MCF 10A (cell line): ENCODE measurements at regions of chr9 and their contacts with region 1.

Region 1: DNA sequence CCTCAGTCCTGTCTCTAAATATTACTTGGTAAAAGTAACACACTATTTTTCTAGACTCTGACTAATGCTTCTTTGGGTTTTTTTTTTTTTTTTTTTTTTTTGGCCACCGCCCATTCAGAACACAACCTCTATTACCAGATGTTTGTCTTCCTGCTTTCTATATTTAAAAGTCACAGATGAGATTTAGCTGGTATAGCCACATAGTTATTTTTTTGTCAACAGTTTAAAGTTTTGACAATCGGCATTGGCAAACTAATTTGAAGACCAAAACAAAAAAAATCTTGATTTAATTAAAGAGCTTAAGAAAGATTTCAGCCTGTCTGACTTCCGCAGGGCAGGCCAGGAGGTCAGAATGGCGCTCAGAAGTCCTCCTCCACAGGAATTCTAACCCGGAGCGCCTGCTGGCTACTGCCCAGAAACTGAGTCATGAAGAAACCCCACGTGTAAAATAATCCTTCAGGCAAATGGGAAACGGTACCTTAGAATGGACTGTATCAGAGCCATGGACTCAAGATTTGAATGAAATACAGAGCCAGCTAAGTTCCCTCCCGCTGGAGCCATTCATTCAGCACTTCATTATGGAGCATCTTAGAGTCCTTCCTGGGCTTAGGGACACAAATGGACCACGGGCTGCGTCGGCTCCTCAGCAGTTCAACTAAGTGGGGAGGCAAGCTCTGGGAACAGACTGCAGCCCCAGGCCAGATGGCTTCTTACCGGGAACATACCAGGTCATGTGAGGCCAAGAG is 55.6 kb downstream of the PTPDC1 start:
- DNase-seq: peak; percentile 97
- H3K4me3 Mint-ChIP-seq: peak overlapping the region; percentile 62
- H3K27ac Mint-ChIP-seq: peak overlapping the region; percentile 93
- H3K4me1 Mint-ChIP-seq: peaks cover 69% of the 10 kb centered on the region
- H3K27me3 Mint-ChIP-seq: no peaks in the 10 kb centered on the region
- CTCF ChIP-seq: no peak

Region 2: GRCh38 chr9:93536874-93537273 is 603.0 kb before region 1 on chr9:
- CTCF ChIA-PET with region 1: no interaction called
- POLR2A ChIA-PET with region 1: no interaction called
- intact Hi-C with region 1: no loop called
- DNase-seq: peak; percentile 5
- H3K4me3 Mint-ChIP-seq: no peak overlapping the region
- H3K27ac Mint-ChIP-seq: no peak overlapping the region
- H3K4me1 Mint-ChIP-seq: no peaks in the 10 kb centered on the region
- H3K27me3 Mint-ChIP-seq: no peaks in the 10 kb centered on the region
- CTCF ChIP-seq: no peak

Region 3: DNA sequence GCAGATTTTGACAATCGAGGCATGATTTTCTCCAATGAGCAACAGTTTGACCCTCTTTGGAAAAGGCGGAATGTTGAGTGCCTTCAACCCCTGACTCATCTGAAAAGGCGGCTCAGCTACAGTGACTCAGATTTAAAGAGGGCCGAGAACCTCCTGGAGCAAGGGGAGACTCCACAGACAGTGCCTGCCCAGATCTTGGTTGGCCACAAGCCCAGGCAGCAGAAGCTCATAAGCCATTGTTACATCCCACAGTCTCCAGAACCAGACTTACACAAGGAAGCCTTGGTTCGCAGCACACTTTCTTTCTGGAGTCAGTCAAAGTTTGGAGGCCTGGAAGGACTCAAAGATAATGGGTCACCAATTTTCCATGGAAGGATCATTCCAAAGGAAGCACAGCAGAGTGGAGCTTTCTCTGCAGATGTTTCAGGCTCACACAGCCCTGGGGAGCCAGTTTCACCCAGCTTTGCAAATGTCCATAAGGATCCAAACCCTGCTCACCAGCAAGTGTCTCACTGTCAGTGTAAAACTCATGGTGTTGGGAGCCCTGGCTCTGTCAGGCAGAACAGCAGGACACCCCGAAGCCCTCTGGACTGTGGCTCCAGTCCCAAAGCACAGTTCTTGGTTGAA is 41.9 kb before region 1 on chr9:
- CTCF ChIA-PET with region 1: interaction called, 7 read pairs
- POLR2A ChIA-PET with region 1: interaction called, 120 read pairs
- intact Hi-C with region 1: loop called (anchors 5 kb)
- DNase-seq: peak; percentile 96
- H3K4me3 Mint-ChIP-seq: peak overlapping the region; percentile 35
- H3K27ac Mint-ChIP-seq: peak overlapping the region; percentile 97
- H3K4me1 Mint-ChIP-seq: peaks cover 26% of the 10 kb centered on the region
- H3K27me3 Mint-ChIP-seq: no peaks in the 10 kb centered on the region
- CTCF ChIP-seq: no peak

Region 4: DNA sequence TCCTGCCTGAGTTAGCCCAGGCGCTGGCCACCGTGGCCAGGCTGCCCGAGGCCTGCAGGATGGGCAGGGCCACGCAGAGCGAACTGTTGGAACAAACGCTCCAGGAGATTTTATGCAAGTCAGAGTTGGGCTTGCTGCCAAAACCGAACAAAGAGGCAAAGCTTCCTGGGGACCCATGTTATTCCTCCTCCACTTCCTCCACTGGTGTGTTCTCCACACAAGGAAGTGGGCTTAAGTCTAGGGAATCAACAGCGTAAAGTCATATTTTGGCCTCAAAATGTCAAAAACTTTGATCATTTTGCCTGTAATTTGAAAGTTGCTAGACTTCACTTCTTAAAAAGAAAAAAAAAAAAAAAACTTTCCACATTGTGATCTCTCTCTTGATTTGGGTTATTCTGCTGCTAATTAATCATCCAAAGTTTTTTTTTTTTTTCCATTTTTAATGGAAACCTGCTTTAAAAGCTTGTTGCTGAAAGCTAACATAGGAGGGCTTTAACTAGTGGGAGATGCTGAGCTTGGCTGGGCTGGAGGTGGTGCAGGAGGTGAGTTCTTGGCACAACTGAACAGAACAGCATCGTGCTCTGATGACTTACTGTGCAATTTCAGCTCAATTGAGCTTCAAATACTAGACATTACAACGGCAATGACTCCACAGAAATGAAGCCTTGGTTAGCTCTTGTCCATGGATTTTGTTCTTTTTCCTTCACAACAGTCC is 17.4 kb after region 1 on chr9:
- CTCF ChIA-PET with region 1: interaction called, 5 read pairs
- POLR2A ChIA-PET with region 1: interaction called, 196 read pairs
- intact Hi-C with region 1: no loop called
- DNase-seq: peak; percentile 93
- H3K4me3 Mint-ChIP-seq: no peak overlapping the region
- H3K27ac Mint-ChIP-seq: peak overlapping the region; percentile 96
- H3K4me1 Mint-ChIP-seq: peaks cover 17% of the 10 kb centered on the region
- H3K27me3 Mint-ChIP-seq: no peaks in the 10 kb centered on the region
- CTCF ChIP-seq: no peak

Region 5: DNA sequence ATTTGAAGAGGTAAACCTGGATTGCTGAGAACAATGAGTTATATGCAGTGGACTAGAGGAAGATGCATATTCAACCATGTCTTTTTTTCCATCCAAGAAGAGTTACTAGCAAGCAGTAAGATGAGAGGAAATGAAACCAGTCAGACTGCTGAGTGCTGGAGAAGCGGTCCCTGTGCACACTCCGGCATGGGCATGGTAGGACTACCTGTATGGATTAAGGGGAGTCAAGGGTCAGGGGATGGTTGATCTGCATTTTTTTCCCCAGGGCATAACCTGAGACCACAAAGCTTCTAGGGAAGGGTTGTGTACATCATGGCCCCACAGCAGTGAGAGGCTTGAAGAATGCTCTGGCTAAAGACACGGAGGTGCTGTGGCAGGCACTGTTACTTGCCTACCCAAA is 42.7 kb after region 1 on chr9:
- CTCF ChIA-PET with region 1: no interaction called
- POLR2A ChIA-PET with region 1: interaction called, 13 read pairs
- intact Hi-C with region 1: no loop called
- DNase-seq: no peak
- H3K4me3 Mint-ChIP-seq: no peak overlapping the region
- H3K27ac Mint-ChIP-seq: peak overlapping the region; percentile 54
- H3K4me1 Mint-ChIP-seq: peaks cover 13% of the 10 kb centered on the region
- H3K27me3 Mint-ChIP-seq: no peaks in the 10 kb centered on the region
- CTCF ChIP-seq: no peak

Region 6: GRCh38 chr9:94259077-94259892 is 119.4 kb after region 1 on chr9 and contains the start of gene ZNF169:
- CTCF ChIA-PET with region 1: no interaction called
- POLR2A ChIA-PET with region 1: no interaction called
- intact Hi-C with region 1: no loop called
- DNase-seq: peak; percentile 87
- H3K4me3 Mint-ChIP-seq: peak within 1 kb of the TSS; percentile 100
- H3K27ac Mint-ChIP-seq: peak within 1 kb of the TSS; percentile 94
- H3K4me1 Mint-ChIP-seq: peaks cover 4% of the 10 kb centered on the region
- H3K27me3 Mint-ChIP-seq: peaks cover 27% of the 10 kb centered on the region
- CTCF ChIP-seq: no peak
- total RNA-seq, gene ZNF169: 3.9 and 4.6 TPM in 2 replicates